ENCODE measurements at regions of chr15 and their contacts with region 1.

Region 1: GRCh38 chr15:85858586-85859375 is 64.1 kb upstream of the KLHL25 start:
- DNase-seq: peak; percentile 85
- ATAC-seq: peak; percentile 94
- H3K4me3 Mint-ChIP-seq: peak overlapping the region; percentile 4
- H3K27ac Mint-ChIP-seq: no peak overlapping the region
- H3K4me1 Mint-ChIP-seq: peaks cover 13% of the 10 kb centered on the region
- H3K27me3 Mint-ChIP-seq: peaks cover 32% of the 10 kb centered on the region

Region 2: DNA sequence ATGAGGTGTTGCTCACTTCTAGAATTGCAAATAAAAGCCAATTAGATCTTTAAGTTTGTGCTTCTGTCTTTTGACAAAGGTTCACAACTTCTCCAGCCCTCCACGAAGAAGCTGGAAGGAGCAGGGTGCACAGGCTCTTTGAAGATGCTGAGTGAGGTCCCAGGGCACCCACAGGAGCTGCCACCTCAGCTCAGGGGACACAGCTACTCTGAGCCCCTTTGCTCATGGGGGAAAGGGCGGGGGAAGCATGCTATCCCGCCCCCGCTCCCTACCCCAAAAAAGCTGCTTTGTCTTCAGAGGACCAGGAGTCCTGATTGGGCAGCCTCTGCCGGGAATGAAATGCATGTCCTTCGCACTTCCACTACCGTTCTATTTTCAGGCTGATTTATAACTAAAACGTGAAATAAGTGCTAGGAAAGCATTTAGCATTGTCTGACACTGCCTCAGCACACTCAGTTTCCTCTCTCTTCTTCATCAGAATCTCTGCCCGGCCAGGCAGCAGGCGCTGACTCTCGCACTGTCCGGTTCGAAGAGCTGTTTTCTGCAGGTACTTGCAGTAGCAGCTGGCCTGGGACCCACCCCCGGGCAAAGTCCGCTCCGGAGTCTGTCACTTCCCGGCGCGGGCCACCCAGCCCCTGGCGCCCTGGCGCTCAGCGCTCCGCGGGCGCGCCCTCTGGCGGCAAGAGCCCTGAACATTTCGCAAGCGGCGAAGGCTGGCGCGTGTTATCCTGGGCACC is 18.5 kb before region 1 on chr15:
- CTCF ChIA-PET with region 1: interaction called, 13 read pairs
- DNase-seq: peak; percentile 83
- ATAC-seq: peak; percentile 99
- H3K4me3 Mint-ChIP-seq: peak overlapping the region; percentile 59
- H3K27ac Mint-ChIP-seq: no peak overlapping the region
- H3K4me1 Mint-ChIP-seq: no peaks in the 10 kb centered on the region
- H3K27me3 Mint-ChIP-seq: peaks cover 9% of the 10 kb centered on the region

Region 3: GRCh38 chr15:85871545-85871944 is 12.8 kb after region 1 on chr15:
- CTCF ChIA-PET with region 1: interaction called, 30 read pairs
- DNase-seq: peak; percentile 71
- ATAC-seq: peak; percentile 84
- H3K4me3 Mint-ChIP-seq: no peak overlapping the region
- H3K27ac Mint-ChIP-seq: peak overlapping the region; percentile 55
- H3K4me1 Mint-ChIP-seq: peaks cover 16% of the 10 kb centered on the region
- H3K27me3 Mint-ChIP-seq: peaks cover 27% of the 10 kb centered on the region